Sciatic nerve (tissue), 2 donors: ENCODE measurements at regions of chr16 and their contacts with region 1.

Region 1: DNA sequence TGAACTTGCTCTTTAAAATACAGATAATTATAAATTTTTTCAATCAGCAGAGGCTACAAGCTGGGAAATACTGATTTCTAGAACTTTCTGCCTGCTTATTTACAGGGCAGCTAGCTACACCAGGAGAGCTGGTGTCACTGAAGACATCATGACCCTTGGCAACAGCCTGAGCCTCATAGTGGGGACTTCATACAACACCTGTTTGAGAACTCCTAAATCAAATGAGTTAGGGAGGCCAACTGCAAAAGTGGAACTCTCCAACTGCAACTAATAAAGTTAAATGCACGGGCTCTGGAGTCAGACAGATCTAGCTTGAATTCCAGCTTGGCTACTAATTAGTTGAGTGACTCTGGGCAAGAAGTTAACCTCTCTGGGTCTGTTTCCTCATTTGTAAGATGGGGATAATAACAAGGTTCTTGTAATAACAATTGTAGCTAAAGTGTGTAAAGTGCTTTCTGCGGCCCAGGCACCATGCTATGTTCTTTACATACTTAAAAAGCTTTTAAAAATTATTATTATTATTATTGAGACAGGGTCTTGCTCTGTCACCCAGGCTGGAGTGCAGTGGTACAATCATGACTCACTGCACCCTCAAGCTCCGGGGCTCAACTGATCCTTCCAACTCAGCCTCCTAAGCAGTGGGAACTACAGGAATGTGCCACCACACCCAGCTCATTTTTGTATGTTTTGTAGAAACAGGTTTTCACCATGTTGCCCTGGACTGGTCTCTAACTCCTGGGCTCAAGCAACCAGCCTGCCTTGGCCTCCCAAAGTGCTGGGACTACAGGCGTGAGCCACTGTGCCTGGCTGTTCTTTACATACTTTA is 33.4 kb downstream of the VAC14 start:
- DNase-seq: no peak
- ATAC-seq: no peak

Region 2: DNA sequence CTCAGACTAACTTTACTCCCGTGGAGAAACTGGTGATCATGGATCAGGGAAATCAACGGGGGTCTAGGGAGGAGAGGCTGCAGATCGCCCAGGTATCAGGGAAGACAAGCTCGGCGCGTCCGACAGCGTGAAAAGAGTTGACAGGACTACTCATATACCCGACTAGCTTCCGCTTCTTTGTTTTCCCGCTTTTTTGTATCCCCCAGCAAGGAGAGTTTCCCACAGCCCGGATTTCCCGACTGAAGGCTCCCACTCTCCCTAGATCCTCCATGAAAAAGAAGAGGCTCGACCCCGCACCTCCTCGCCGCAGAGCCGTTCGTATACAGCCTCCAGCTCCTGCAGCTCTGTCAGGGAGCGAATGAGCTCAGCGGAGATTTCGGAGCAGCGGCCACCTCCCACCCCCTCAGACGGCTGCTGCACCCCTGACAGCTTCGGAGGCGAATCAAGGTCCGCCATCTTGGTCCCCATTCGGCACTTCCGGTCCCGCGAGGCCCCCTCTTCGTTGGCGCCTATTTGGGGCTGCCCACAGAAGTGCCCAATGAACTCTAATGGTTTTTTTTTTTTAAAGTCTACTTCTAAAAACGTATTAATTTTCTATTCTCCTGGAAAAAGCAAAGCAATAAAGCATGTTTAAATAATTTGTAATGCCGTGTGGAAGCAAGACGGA is 244.4 kb before region 1 on chr16 and contains the start of gene COG4:
- intact Hi-C with region 1: loop called (anchors 10 kb)
- DNase-seq: peak; percentile 92
- ATAC-seq: peak; percentile 96
- total RNA-seq, gene COG4: 51.0 TPM

Region 3: DNA sequence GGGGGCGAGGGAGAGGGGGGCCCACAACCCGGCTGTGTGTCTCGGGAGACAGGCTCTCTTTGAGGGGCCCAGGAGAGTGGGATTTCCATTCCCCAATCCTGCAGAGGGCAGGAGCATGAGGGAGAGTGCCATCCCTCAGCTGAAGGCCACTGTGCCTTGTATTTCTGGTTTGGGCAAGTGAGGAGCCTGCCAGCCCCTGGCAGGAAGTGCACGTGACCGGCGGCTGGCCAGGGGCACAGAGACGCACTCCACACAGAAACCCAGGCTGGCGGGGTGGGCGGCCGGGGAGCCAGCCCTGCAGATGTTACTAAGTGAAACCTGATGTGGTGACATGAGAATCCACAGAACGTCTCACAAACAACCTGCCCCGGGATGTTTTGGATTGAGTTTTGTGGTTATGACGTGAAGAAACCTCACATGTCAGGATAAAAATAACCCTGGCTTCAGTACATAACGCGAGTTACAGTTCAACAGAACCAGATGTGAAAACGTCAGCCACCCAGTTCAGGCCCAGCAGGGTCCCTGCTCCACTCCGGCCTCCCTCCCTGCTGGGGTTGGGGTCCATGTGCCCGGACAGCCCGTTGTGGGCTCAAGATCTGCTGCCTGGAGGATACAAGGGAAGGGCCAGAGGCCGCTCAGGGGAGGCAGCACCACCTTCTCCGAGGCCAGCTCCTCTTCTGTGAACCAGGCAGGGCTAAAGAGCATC is 30.1 kb before region 1 on chr16:
- intact Hi-C with region 1: no loop called
- DNase-seq: peak; percentile 82
- ATAC-seq: peak; percentile 87

Region 4: GRCh38 chr16:71515026-71515425 is 747.4 kb after region 1 on chr16:
- intact Hi-C with region 1: no loop called
- DNase-seq: no peak
- ATAC-seq: no peak